ENCODE measurements at regions of chr15 and their contacts with region 1.

Region 1: DNA sequence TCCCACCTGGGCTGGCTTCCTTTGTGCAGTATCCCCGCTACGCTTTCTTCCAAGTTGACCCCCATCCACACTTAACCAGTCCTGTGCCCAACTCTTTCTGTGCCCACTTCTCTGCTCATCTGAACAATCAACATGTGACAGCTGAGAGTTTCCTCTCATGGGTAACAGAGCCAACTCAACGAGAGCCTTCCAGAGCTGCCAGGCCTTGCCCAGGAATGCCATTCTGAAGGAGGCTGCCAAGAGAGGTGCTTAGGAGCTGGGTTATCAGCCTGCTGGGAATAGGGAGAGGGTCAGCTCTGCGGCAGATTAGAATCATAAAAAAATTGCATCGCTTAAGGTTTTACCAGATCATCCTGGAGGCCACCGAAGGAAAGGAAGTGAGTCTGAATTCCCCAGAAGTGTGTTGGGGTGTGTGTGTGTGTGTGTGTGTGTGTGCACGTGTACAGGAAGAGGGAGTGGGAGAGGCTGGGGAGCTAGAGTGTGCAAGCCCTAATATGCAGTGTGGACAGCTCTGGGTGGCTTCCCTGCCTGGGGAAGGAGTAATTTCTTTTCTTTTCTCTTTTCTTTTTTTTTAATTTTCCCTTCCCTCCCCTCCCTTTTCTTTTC is 66.7 kb downstream of the ITGA11 start:
- DNase-seq: no peak
- ATAC-seq: peak; percentile 74

Region 2: GRCh38 chr15:68175526-68175925 is 189.7 kb before region 1 on chr15:
- intact Hi-C with region 1: no loop called
- DNase-seq: no peak
- ATAC-seq: no peak

Region 3: GRCh38 chr15:68341760-68342725 is 23.2 kb before region 1 on chr15:
- intact Hi-C with region 1: loop called (anchors 2 kb)
- DNase-seq: no peak
- ATAC-seq: peak; percentile 52

Region 4: GRCh38 chr15:68503791-68504680 is 138.8 kb after region 1 on chr15:
- intact Hi-C with region 1: no loop called
- DNase-seq: no peak
- ATAC-seq: no peak